ENCODE measurements at regions of chr7 and their contacts with region 1.

Region 1: GRCh38 chr7:135977007-135977741 is at the start of gene MTPN:
- DNase-seq: peak; percentile 99
- H3K4me3 Mint-ChIP-seq: peak within 1 kb of the TSS; percentile 90
- H3K27ac Mint-ChIP-seq: peak within 1 kb of the TSS; percentile 92
- H3K4me1 Mint-ChIP-seq: peaks cover 73% of the 10 kb centered on the region
- H3K27me3 Mint-ChIP-seq: no peaks in the 10 kb centered on the region
- total RNA-seq, gene MTPN: 138 to 143 TPM

Region 2: GRCh38 chr7:135170274-135170997 is 806.7 kb before region 1 on chr7 and contains the start of gene CYREN:
- CTCF ChIA-PET with region 1: no interaction called
- POLR2A ChIA-PET with region 1: no interaction called
- intact Hi-C with region 1: loop called (anchors 5 kb)
- DNase-seq: peak; percentile 95
- H3K4me3 Mint-ChIP-seq: peak within 1 kb of the TSS; percentile 96
- H3K27ac Mint-ChIP-seq: peak within 1 kb of the TSS; percentile 99
- H3K4me1 Mint-ChIP-seq: peaks cover 45% of the 10 kb centered on the region
- H3K27me3 Mint-ChIP-seq: no peaks in the 10 kb centered on the region
- total RNA-seq, gene CYREN: 41.6 to 43.6 TPM

Region 3: GRCh38 chr7:135459951-135460567 is 517.1 kb before region 1 on chr7:
- CTCF ChIA-PET with region 1: no interaction called
- POLR2A ChIA-PET with region 1: no interaction called
- intact Hi-C with region 1: no loop called
- DNase-seq: no peak
- H3K4me3 Mint-ChIP-seq: no peak overlapping the region
- H3K27ac Mint-ChIP-seq: no peak overlapping the region
- H3K4me1 Mint-ChIP-seq: peaks cover 45% of the 10 kb centered on the region
- H3K27me3 Mint-ChIP-seq: no peaks in the 10 kb centered on the region

Region 4: DNA sequence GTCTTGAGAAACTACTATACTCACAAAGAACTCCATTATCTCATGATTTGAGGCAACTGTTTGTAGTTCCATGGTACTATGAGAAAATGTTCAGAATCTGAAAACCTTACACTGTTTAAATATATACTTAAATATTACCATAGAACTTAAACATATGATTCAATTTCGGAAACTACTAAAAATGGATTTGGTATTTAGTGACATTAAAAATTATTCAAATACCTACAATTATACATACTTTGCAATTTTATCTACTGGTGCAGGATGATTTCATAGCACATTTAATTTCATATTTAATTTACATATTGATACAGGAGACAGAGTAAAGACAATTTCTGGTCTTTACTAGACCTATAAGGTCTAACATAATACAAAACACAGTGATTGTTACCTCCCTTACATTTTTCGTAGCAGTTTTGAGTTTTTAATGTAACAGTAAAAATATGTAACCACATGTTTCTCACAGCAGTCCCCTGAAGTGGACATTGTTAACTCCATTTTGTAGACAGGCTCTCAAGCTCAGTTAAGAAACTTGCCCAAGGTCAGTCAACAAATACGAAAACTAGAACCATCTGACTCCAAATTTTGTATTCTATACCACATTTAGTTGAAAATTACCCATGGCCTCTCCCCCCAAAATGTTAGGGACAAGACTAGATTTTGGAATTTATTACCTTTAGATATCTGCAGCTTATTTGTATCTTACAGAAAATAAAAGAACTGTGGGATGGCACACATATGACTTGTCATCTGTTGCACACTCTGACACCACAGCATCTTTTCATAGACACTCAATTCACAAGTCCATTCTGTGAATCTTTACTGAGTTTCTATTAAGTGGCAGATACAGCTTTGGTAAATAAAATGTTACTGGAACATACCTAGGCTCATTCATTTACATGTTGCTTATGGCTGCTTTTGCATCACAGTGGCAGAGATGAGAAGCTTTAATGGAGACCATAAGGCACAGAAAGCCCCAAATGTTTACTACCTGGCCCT is 36.8 kb before region 1 on chr7:
- CTCF ChIA-PET with region 1: no interaction called
- POLR2A ChIA-PET with region 1: no interaction called
- intact Hi-C with region 1: loop called (anchors 2 kb)
- DNase-seq: no peak
- H3K4me3 Mint-ChIP-seq: no peak overlapping the region
- H3K27ac Mint-ChIP-seq: no peak overlapping the region
- H3K4me1 Mint-ChIP-seq: peaks cover 64% of the 10 kb centered on the region
- H3K27me3 Mint-ChIP-seq: no peaks in the 10 kb centered on the region

Region 5: DNA sequence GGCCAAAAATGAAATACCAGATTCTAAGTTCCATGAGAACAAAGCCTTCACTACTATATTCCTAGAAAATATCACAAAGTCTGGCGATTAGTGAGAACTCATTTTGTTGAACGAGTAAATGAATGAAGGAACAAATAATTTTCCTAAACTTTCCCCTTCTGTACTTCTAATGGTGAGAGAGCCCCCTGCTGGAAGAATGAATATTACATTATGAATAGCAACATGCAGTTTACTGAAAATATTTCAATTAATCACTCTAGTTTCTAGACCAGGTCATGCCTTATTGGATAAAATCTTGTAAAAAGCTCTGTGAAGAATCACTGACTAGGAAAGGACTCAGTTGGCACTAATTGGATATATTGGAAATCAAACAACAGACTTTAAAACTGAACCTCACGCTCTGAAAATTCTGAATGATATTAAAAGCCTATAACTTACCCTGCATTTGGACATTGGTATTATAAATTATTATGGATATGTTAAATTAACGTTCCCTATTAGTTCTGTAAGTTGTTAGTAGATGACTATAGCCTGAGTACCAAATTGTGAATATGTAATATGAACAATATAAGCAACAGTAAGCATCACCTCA is 32.4 kb after region 1 on chr7:
- CTCF ChIA-PET with region 1: interaction called, 3 read pairs
- POLR2A ChIA-PET with region 1: no interaction called
- intact Hi-C with region 1: loop called (anchors 1 kb)
- DNase-seq: no peak
- H3K4me3 Mint-ChIP-seq: no peak overlapping the region
- H3K27ac Mint-ChIP-seq: no peak overlapping the region
- H3K4me1 Mint-ChIP-seq: peaks cover 7% of the 10 kb centered on the region
- H3K27me3 Mint-ChIP-seq: peaks cover 3% of the 10 kb centered on the region

Region 6: GRCh38 chr7:136064081-136064480 is 86.9 kb after region 1 on chr7:
- CTCF ChIA-PET with region 1: interaction called, 3 read pairs
- POLR2A ChIA-PET with region 1: interaction called, 7 read pairs
- intact Hi-C with region 1: loop called (anchors 1 kb)
- DNase-seq: peak; percentile 41
- H3K4me3 Mint-ChIP-seq: no peak overlapping the region
- H3K27ac Mint-ChIP-seq: peak overlapping the region; percentile 77
- H3K4me1 Mint-ChIP-seq: peaks cover 29% of the 10 kb centered on the region
- H3K27me3 Mint-ChIP-seq: no peaks in the 10 kb centered on the region